ENCODE measurements at regions of chr15 and their contacts with region 1.

Region 1: DNA sequence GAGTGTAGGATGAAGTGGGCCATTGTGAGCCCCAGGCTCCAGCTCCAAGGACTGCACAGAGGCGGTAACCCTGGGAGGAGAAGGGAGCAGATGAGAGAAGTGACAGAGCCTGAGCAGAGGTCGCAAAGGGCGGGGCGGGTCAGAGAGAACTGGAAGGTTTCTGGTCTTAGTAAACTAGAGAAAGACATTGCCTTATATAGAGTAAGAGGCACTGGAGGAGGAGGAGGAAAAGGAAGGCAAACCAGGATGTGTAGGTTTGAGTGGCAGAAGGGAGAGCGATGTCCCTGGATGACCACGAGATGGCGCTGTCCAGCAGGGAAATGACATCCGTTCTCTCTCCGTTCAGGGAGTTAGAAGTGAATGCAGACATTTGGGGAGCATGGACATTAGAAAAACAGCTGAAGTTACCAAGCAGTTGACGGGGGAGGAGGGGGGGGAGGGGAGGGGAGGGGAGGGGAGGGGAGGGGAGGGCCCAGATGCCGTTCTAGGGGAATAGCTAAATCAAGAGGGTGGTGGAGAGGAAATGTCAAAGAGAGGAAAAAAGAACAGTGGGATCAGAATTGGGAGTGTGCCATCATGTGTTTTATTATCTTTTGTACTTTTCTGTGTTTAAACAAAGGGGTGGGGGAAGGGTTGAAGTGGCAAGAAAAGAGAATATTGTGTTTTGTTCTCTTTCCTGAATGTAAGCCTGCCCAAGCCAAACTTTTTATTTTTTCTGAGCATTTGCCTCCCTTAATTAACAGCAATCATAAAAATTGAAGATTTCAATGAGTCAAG is 48.8 kb downstream of the STARD5 start:
- DNase-seq: peak; percentile 88
- ATAC-seq: peak; percentile 90
- H3K4me3 Mint-ChIP-seq: no peak overlapping the region
- H3K27ac Mint-ChIP-seq: peak overlapping the region; percentile 45
- H3K4me1 Mint-ChIP-seq: peaks cover 16% of the 10 kb centered on the region
- H3K27me3 Mint-ChIP-seq: no peaks in the 10 kb centered on the region

Region 2: GRCh38 chr15:81286621-81287121 is 11.6 kb after region 1 on chr15:
- CTCF ChIA-PET with region 1: interaction called, 60 read pairs
- DNase-seq: no peak
- ATAC-seq: peak; percentile 87
- H3K4me3 Mint-ChIP-seq: peak overlapping the region; percentile 11
- H3K27ac Mint-ChIP-seq: peak overlapping the region; percentile 59
- H3K4me1 Mint-ChIP-seq: peaks cover 40% of the 10 kb centered on the region
- H3K27me3 Mint-ChIP-seq: no peaks in the 10 kb centered on the region

Region 3: GRCh38 chr15:81301815-81302399 is 26.8 kb after region 1 on chr15:
- CTCF ChIA-PET with region 1: interaction called, 60 read pairs
- DNase-seq: peak; percentile 82
- ATAC-seq: peak; percentile 64
- H3K4me3 Mint-ChIP-seq: peak overlapping the region; percentile 96
- H3K27ac Mint-ChIP-seq: peak overlapping the region; percentile 77
- H3K4me1 Mint-ChIP-seq: peaks cover 76% of the 10 kb centered on the region
- H3K27me3 Mint-ChIP-seq: no peaks in the 10 kb centered on the region

Region 4: GRCh38 chr15:81323944-81324881 is 49.1 kb after region 1 on chr15 and contains the start of gene STARD5:
- CTCF ChIA-PET with region 1: interaction called, 16 read pairs
- DNase-seq: peak; percentile 98
- ATAC-seq: peak; percentile 100
- H3K4me3 Mint-ChIP-seq: peak within 1 kb of the TSS; percentile 85
- H3K27ac Mint-ChIP-seq: peak within 1 kb of the TSS; percentile 78
- H3K4me1 Mint-ChIP-seq: peaks cover 29% of the 10 kb centered on the region
- H3K27me3 Mint-ChIP-seq: no peaks in the 10 kb centered on the region
- total RNA-seq, gene STARD5: 4.8 to 5.2 TPM

Region 5: GRCh38 chr15:81394603-81395002 is 119.5 kb after region 1 on chr15:
- CTCF ChIA-PET with region 1: interaction called, 21 read pairs
- DNase-seq: no peak
- ATAC-seq: no peak
- H3K4me3 Mint-ChIP-seq: no peak overlapping the region
- H3K27ac Mint-ChIP-seq: no peak overlapping the region
- H3K4me1 Mint-ChIP-seq: no peaks in the 10 kb centered on the region
- H3K27me3 Mint-ChIP-seq: no peaks in the 10 kb centered on the region

Region 6: GRCh38 chr15:81419332-81419943 is 144.3 kb after region 1 on chr15:
- CTCF ChIA-PET with region 1: no interaction called
- DNase-seq: no peak
- ATAC-seq: no peak
- H3K4me3 Mint-ChIP-seq: no peak overlapping the region
- H3K27ac Mint-ChIP-seq: no peak overlapping the region
- H3K4me1 Mint-ChIP-seq: peaks cover 5% of the 10 kb centered on the region
- H3K27me3 Mint-ChIP-seq: peaks cover 14% of the 10 kb centered on the region